Naive thymus-derived CD4-positive, alpha-beta T cell (primary cell): ENCODE measurements at regions of chr1 and their contacts with region 1.

Region 1: DNA sequence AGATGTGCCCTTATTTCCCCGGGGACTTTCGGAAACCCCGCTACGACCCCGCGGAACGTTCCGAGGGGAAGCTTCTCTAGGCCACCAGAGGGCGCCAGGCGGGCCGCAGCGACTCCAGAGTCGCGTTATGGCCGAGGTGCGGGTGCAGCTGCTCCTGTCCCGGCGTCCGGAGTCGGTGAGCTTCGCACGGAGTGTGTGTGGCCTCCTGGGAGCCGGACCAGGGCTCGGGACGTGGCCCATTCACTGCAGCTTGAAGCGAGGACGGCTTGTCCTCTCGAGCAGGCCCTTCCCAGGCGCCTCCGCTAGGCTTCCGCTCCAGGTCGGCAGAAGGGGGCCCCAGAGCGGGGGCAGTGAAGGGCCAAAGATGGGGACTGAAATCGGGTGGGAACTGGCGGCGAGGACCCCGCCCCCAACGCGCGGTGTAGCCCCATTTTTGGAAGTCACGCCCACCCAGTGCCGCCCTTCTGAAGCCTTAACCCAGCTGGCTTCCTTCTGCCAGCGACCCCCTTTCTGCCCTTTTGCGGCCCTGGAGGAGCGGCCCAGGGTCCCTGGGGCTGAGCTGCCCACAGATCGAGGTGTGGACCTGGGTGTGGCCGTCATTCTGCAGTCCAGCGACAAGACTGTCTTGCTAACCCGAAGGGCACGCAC is at the start of gene NUDT17:
- DNase-seq: peak; percentile 52 to 78 (median 71)
- ATAC-seq: peak; percentile 89
- H3K4me3 ChIP-seq: peak within 1 kb of the TSS; percentile 86
- H3K4me3 Mint-ChIP-seq: no peak within 1 kb of the TSS
- H3K27ac ChIP-seq: peak within 1 kb of the TSS; percentile 69
- H3K27ac Mint-ChIP-seq: peak within 1 kb of the TSS in 5 of 9 donors; percentile 54 to 93 (median 77)
- H3K4me1 ChIP-seq: peaks cover 10 to 15% of the 10 kb centered on the region in 2 donors
- H3K4me1 Mint-ChIP-seq: peaks cover 6 to 21% (median 14%) of the 10 kb centered on the region in 7 donors
- H3K27me3 ChIP-seq: no peaks in the 10 kb centered on the region
- H3K27me3 Mint-ChIP-seq: no peaks in the 10 kb centered on the region
- total RNA-seq, gene NUDT17: 2.9 to 6.7 (median 3.4) TPM

Region 2: GRCh38 chr1:145871994-145872924 is 26.6 kb after region 1 on chr1:
- CTCF ChIA-PET with region 1: interaction called, 21 read pairs
- POLR2A ChIA-PET with region 1: no interaction called
- intact Hi-C with region 1: loop called in 1 of 2 experiments (anchors 1 kb)
- DNase-seq: peak in 8 of 9 donors; percentile 21 to 54 (median 44)
- ATAC-seq: peak; percentile 87
- H3K4me3 ChIP-seq: peak overlapping the region; percentile 55
- H3K4me3 Mint-ChIP-seq: peak overlapping the region; percentile 75 to 87 (median 82)
- H3K27ac ChIP-seq: peak overlapping the region; percentile 46
- H3K27ac Mint-ChIP-seq: peak overlapping the region; percentile 39 to 92 (median 76)
- H3K4me1 ChIP-seq: peaks cover 5 to 6% of the 10 kb centered on the region in 2 donors
- H3K4me1 Mint-ChIP-seq: peaks cover 16 to 18% (median 17%) of the 10 kb centered on the region in 7 donors
- H3K27me3 ChIP-seq: no peaks in the 10 kb centered on the region
- H3K27me3 Mint-ChIP-seq: peaks cover 0 to 42% (median 0%) of the 10 kb centered on the region in 5 donors

Region 3: GRCh38 chr1:145906954-145907753 is 61.5 kb after region 1 on chr1:
- CTCF ChIA-PET with region 1: interaction called, 41 read pairs
- POLR2A ChIA-PET with region 1: interaction called, 8 read pairs
- intact Hi-C with region 1: loop called (anchors 1 kb)
- DNase-seq: no peak
- ATAC-seq: no peak
- H3K4me3 ChIP-seq: no peak overlapping the region
- H3K4me3 Mint-ChIP-seq: no peak overlapping the region
- H3K27ac ChIP-seq: no peak overlapping the region
- H3K27ac Mint-ChIP-seq: peak overlapping the region in 1 of 9 donors; percentile 49
- H3K4me1 ChIP-seq: no peaks in the 10 kb centered on the region
- H3K4me1 Mint-ChIP-seq: peaks cover 0 to 16% (median 5%) of the 10 kb centered on the region in 7 donors
- H3K27me3 ChIP-seq: no peaks in the 10 kb centered on the region
- H3K27me3 Mint-ChIP-seq: no peaks in the 10 kb centered on the region

Region 4: GRCh38 chr1:145963995-145964901 is 118.6 kb after region 1 on chr1 and contains the starts of genes ANKRD34A and POLR3GL:
- CTCF ChIA-PET with region 1: interaction called, 21 read pairs
- POLR2A ChIA-PET with region 1: interaction called, 5 read pairs
- intact Hi-C with region 1: no loop called
- DNase-seq: peak; percentile 71 to 94 (median 89)
- ATAC-seq: peak; percentile 96
- H3K4me3 ChIP-seq: peak within 1 kb of the TSS; percentile 87
- H3K4me3 Mint-ChIP-seq: peak within 1 kb of the TSS; percentile 88 to 99 (median 96)
- H3K27ac ChIP-seq: peak within 1 kb of the TSS; percentile 84
- H3K27ac Mint-ChIP-seq: peak within 1 kb of the TSS; percentile 87 to 98 (median 92)
- H3K4me1 ChIP-seq: peaks cover 14 to 31% of the 10 kb centered on the region in 2 donors
- H3K4me1 Mint-ChIP-seq: peaks cover 38 to 62% (median 57%) of the 10 kb centered on the region in 7 donors
- H3K27me3 ChIP-seq: no peaks in the 10 kb centered on the region
- H3K27me3 Mint-ChIP-seq: peaks cover 0 to 4% (median 0%) of the 10 kb centered on the region in 5 donors
- total RNA-seq, gene ANKRD34A: 0.54 to 1.5 (median 1.2) TPM
- total RNA-seq, gene POLR3GL: 20.7 to 37.5 (median 25.5) TPM

Region 5: GRCh38 chr1:146012737-146013403 is 167.2 kb after region 1 on chr1:
- CTCF ChIA-PET with region 1: interaction called, 44 read pairs
- POLR2A ChIA-PET with region 1: interaction called, 7 read pairs
- intact Hi-C with region 1: loop called (anchors 1 kb)
- DNase-seq: peak in 7 of 9 donors; percentile 60 to 77 (median 65)
- ATAC-seq: peak; percentile 73
- H3K4me3 ChIP-seq: no peak overlapping the region
- H3K4me3 Mint-ChIP-seq: peak overlapping the region in 1 of 10 donors; percentile 53
- H3K27ac ChIP-seq: no peak overlapping the region
- H3K27ac Mint-ChIP-seq: no peak overlapping the region
- H3K4me1 ChIP-seq: peaks cover 0 to 1% of the 10 kb centered on the region in 2 donors
- H3K4me1 Mint-ChIP-seq: peaks cover 4 to 12% (median 10%) of the 10 kb centered on the region in 7 donors
- H3K27me3 ChIP-seq: no peaks in the 10 kb centered on the region
- H3K27me3 Mint-ChIP-seq: peaks cover 3 to 32% (median 4%) of the 10 kb centered on the region in 5 donors